Activated CD8-positive, alpha-beta T cell treated with anti-CD3 and anti-CD28 coated beads, Interleukin-2, amount 10 ng/mL, durations not matched to agents 7 days and 5 days (primary cell): ENCODE measurements at regions of chr1 and their contacts with region 1.

Region 1: GRCh38 chr1:52702886-52703787 is 5.0 kb upstream of the COA7 start:
- DNase-seq: peak; percentile 89
- ATAC-seq: peak; percentile 94
- H3K4me3 Mint-ChIP-seq: peak overlapping the region; percentile 86
- H3K27ac Mint-ChIP-seq: peak overlapping the region; percentile 91
- H3K4me1 Mint-ChIP-seq: peaks cover 28% of the 10 kb centered on the region
- H3K27me3 Mint-ChIP-seq: peaks cover 3% of the 10 kb centered on the region

Region 2: GRCh38 chr1:52726265-52727113 is 23.4 kb after region 1 on chr1 and contains the start of gene ZYG11B:
- CTCF ChIA-PET with region 1: interaction called, 7 read pairs
- POLR2A ChIA-PET with region 1: interaction called, 14 read pairs
- DNase-seq: peak; percentile 92
- ATAC-seq: peak; percentile 95
- H3K4me3 Mint-ChIP-seq: peak within 1 kb of the TSS; percentile 78
- H3K27ac Mint-ChIP-seq: peak within 1 kb of the TSS; percentile 83
- H3K4me1 Mint-ChIP-seq: peaks cover 24% of the 10 kb centered on the region
- H3K27me3 Mint-ChIP-seq: peaks cover 8% of the 10 kb centered on the region
- total RNA-seq, gene ZYG11B: 6.8 to 7.5 TPM

Region 3: GRCh38 chr1:52748119-52748518 is 45.0 kb after region 1 on chr1:
- CTCF ChIA-PET with region 1: interaction called, 13 read pairs
- POLR2A ChIA-PET with region 1: interaction called, 4 read pairs
- DNase-seq: no peak
- ATAC-seq: no peak
- H3K4me3 Mint-ChIP-seq: no peak overlapping the region
- H3K27ac Mint-ChIP-seq: no peak overlapping the region
- H3K4me1 Mint-ChIP-seq: no peaks in the 10 kb centered on the region
- H3K27me3 Mint-ChIP-seq: no peaks in the 10 kb centered on the region